ENCODE measurements at regions of chr22 and their contacts with region 1.

Region 1: DNA sequence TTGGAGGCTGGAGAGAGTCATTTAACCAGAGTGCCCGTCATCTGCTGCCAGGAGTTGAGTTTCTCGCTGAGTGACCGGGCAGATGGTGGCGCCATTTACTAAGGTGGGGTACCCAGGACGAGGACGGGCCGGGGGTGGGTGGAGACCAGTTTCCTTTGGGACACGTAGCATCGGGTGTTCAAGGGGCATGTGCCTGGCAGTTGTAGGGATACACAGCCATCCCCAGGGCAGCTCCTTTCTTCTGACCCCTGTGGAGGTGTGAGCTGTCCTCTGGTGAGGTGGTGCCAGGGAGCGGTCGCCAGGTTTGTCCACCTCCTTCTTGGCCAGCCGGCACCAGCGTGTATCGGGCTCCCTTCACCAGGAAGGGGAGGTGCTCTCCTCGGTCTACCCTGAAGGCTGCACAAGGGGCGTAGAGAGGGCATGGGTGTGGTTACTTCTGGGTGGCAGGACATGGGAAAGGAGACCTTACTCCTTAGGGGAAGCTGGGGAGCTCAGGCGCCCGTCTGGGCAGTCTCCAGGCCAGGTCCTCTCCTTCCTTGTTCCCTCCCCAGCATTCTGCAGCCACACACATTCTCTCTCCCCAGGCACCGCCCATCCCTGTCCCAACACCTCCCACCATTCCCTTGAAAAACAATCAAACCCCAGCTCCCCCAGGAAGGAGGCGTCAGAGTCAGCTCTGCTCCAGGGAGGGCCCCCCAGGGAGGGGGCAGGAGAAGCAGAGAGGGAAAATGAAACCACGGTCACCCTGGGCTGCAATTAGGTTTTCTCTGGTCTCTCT is 10.3 kb upstream of the MB start:
- DNase-seq: peak; percentile 84 to 93 (median 89)
- H3K4me3 ChIP-seq: peak overlapping the region; percentile 71 to 95 (median 75)
- H3K27ac ChIP-seq: peak overlapping the region; percentile 77 to 90
- H3K4me1 ChIP-seq: peaks cover 0 to 4% (median 0%) of the 10 kb centered on the region in 3 donors
- H3K27me3 ChIP-seq: no peaks in the 10 kb centered on the region
- CTCF ChIP-seq: peak; percentile 82

Region 2: GRCh38 chr22:35582861-35583670 is 44.4 kb before region 1 on chr22:
- intact Hi-C with region 1: no loop called
- DNase-seq: peak; percentile 66 to 76 (median 75)
- H3K4me3 ChIP-seq: no peak overlapping the region
- H3K27ac ChIP-seq: no peak overlapping the region
- H3K4me1 ChIP-seq: peaks cover 0 to 2% (median 0%) of the 10 kb centered on the region in 3 donors
- H3K27me3 ChIP-seq: no peaks in the 10 kb centered on the region
- CTCF ChIP-seq: peak; percentile 94

Region 3: DNA sequence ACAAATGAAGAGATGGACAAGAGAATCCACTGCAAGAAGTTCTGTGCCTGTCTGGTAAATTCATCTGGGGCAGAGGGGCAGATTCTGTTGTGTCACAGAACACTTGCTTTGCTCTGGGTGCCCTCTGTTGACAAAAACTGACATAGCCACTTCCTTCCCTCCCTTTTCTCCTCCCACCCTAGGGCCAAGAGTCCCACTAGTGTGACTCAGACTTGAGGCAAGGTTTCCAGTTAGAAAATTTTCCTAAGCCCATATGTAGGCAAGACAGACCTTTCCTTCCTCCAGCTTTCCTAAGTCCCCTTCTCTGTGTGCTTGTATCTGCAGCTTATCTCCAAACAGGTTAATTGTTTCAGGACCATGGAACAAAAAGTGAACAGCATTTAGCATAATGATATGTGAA is 294.3 kb after region 1 on chr22:
- intact Hi-C with region 1: loop called (anchors 10 kb)
- DNase-seq: peak in 4 of 5 donors; percentile 46 to 80 (median 64)
- H3K4me3 ChIP-seq: no peak overlapping the region
- H3K27ac ChIP-seq: peak overlapping the region; percentile 9 to 44
- H3K4me1 ChIP-seq: peaks cover 0 to 8% (median 0%) of the 10 kb centered on the region in 3 donors
- H3K27me3 ChIP-seq: no peaks in the 10 kb centered on the region
- CTCF ChIP-seq: peak; percentile 77

Measured in kidney (tissue), 22 donors.